ENCODE measurements at regions of chr9 and their contacts with region 1.

Region 1: DNA sequence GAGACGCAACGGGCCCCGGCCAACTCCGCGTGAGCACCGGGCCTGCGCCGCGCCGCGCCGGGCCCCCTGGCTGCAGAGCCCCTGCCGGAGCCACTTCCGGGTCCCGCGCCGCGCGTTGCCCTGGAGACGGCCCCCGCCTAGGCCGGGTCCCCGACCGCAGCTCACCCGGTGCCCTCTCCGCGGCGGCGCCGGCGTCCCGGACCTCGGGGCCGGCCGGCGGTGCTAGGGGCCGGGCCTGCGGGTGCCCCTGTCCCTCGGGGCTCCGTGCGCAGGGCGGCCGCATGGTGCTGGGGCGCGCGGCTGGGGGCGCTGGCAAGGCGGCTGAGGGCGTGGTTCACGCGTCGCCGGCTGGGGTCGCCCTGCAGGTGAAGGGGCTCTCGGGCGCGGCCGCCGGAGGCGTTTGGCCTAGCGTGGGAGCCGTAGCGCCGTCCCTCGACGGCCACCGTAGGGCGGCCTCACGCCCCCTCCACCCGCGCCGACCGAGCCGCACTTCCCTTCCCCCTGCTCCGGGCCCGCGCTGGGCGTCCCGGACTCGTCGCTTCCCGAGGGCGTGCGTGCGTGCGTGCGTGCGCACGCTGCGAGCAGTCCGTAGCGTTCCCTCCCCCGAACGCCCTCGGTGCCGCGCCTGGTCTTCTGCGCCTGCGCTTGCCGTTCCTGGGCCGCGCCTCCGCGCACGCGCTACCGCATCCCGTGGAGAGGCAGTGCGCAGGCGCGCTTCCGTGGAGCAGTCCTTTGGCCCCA is at the start of gene TMEM250:
- DNase-seq: peak; percentile 94 to 98 (median 97)
- ATAC-seq: peak; percentile 94
- H3K4me3 ChIP-seq: peak within 1 kb of the TSS; percentile 81
- H3K4me3 Mint-ChIP-seq: peak within 1 kb of the TSS; percentile 73 to 87 (median 84)
- H3K27ac ChIP-seq: peak within 1 kb of the TSS; percentile 87
- H3K27ac Mint-ChIP-seq: peak within 1 kb of the TSS; percentile 13 to 91 (median 84)
- H3K4me1 ChIP-seq: peaks cover 14 to 33% of the 10 kb centered on the region in 2 donors
- H3K4me1 Mint-ChIP-seq: peaks cover 3 to 26% (median 11%) of the 10 kb centered on the region in 7 donors
- H3K27me3 ChIP-seq: no peaks in the 10 kb centered on the region
- H3K27me3 Mint-ChIP-seq: no peaks in the 10 kb centered on the region
- total RNA-seq, gene TMEM250: 16.4 to 55.3 (median 41.3) TPM

Region 2: GRCh38 chr9:135602789-135603481 is 515.6 kb before region 1 on chr9:
- CTCF ChIA-PET with region 1: no interaction called
- POLR2A ChIA-PET with region 1: no interaction called
- intact Hi-C with region 1: loop called in 1 of 2 experiments (anchors 10 kb)
- DNase-seq: peak in 7 of 9 donors; percentile 31 to 56 (median 37)
- ATAC-seq: peak; percentile 61
- H3K4me3 ChIP-seq: no peak overlapping the region
- H3K4me3 Mint-ChIP-seq: no peak overlapping the region
- H3K27ac ChIP-seq: no peak overlapping the region
- H3K27ac Mint-ChIP-seq: no peak overlapping the region
- H3K4me1 ChIP-seq: no peaks in the 10 kb centered on the region
- H3K4me1 Mint-ChIP-seq: peaks cover 0 to 3% (median 0%) of the 10 kb centered on the region in 7 donors
- H3K27me3 ChIP-seq: no peaks in the 10 kb centered on the region
- H3K27me3 Mint-ChIP-seq: peaks cover 7 to 26% (median 8%) of the 10 kb centered on the region in 5 donors

Region 3: DNA sequence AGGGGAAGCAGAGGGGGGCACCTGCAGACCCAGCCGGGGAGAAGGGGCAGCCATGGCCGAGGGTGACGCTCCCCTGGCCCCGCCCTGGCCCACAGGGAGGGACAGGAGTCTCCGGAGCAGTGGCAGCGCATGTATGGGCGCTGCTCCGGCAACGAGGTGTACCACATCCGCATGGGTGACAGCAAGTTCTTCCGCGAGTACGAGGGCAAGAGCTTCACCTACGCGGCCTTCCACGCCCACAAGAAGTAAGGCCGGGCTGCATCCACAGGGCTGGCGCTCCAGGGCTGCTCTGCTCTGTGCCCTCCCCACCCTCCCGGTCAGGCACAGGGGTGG is 348.3 kb before region 1 on chr9:
- CTCF ChIA-PET with region 1: no interaction called
- POLR2A ChIA-PET with region 1: no interaction called
- intact Hi-C with region 1: no loop called
- DNase-seq: no peak
- ATAC-seq: no peak
- H3K4me3 ChIP-seq: no peak overlapping the region
- H3K4me3 Mint-ChIP-seq: no peak overlapping the region
- H3K27ac ChIP-seq: no peak overlapping the region
- H3K27ac Mint-ChIP-seq: no peak overlapping the region
- H3K4me1 ChIP-seq: no peaks in the 10 kb centered on the region
- H3K4me1 Mint-ChIP-seq: no peaks in the 10 kb centered on the region
- H3K27me3 ChIP-seq: no peaks in the 10 kb centered on the region
- H3K27me3 Mint-ChIP-seq: no peaks in the 10 kb centered on the region

Region 4: DNA sequence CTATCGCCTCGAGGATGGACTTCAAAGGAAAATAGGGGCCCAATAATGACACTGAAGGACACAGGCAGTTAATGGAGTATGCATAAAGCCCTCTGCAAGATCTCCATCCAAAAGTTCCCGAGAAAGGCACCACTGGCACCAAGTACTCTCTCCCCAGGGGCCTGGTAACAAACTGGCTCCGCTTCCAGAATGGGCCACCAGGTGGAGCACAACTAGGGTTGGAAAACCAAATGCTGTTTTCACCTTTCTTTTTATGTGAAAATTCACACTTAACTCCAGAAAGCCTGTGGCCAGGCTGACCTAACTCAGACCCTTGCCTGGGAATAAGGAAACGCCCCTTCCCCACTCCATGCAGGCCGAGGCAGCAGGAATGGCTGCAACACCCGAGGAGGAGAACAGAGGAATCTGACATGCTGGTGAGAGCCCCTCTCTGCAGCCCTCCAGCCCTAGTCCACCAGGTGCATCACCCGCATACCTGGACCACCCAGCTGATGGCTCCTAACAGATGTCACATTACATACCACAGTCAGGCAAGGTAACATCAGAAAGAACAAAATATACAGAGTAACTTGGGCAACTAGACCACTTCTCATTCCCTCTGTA is 253.9 kb before region 1 on chr9:
- CTCF ChIA-PET with region 1: interaction called, 4 read pairs
- POLR2A ChIA-PET with region 1: no interaction called
- intact Hi-C with region 1: loop called (anchors 1 kb)
- DNase-seq: peak; percentile 20 to 70 (median 55)
- ATAC-seq: peak; percentile 74
- H3K4me3 ChIP-seq: no peak overlapping the region
- H3K4me3 Mint-ChIP-seq: no peak overlapping the region
- H3K27ac ChIP-seq: no peak overlapping the region
- H3K27ac Mint-ChIP-seq: no peak overlapping the region
- H3K4me1 ChIP-seq: peaks cover 0 to 4% of the 10 kb centered on the region in 2 donors
- H3K4me1 Mint-ChIP-seq: peaks cover 5 to 26% (median 17%) of the 10 kb centered on the region in 7 donors
- H3K27me3 ChIP-seq: no peaks in the 10 kb centered on the region
- H3K27me3 Mint-ChIP-seq: no peaks in the 10 kb centered on the region

Region 5: DNA sequence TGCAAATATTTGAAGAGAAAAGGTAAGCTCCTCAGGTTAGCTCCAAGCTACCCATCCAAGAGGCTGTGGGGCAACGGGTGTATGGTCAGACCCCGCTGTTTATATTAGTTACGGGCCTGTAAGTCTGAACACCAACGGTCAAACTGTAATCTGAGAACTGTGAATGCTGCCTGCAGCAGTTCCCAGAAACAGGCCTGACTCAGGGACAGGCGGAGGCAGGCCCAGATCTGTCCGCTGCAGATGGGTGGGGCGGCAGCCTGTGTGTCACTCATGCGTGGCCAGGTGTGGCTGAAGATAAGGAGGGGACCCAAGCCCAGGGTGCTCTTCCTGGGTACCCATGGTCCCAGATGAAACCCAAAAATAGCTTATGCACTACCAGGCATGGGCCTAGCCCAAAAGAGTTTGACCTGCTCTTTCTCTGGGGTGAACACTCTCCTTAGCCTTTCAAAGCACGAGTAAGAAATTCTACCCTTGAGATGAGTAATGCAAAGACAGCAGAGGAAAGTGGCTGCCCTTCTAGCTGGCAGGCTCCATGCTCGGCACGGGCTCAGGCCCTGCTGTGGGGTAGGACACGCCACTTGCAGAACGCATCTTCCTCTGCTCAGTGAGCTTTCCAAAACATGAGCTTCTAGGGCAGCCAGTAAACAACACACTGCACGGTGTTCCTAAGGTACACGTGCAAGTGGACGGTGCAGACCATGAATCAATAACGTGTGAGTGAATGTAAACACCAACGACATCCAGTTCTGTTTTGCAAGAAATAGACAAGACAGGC is 166.4 kb before region 1 on chr9:
- CTCF ChIA-PET with region 1: no interaction called
- POLR2A ChIA-PET with region 1: no interaction called
- intact Hi-C with region 1: no loop called
- DNase-seq: no peak
- ATAC-seq: no peak
- H3K4me3 ChIP-seq: no peak overlapping the region
- H3K4me3 Mint-ChIP-seq: no peak overlapping the region
- H3K27ac ChIP-seq: no peak overlapping the region
- H3K27ac Mint-ChIP-seq: no peak overlapping the region
- H3K4me1 ChIP-seq: no peaks in the 10 kb centered on the region
- H3K4me1 Mint-ChIP-seq: peaks cover 0 to 13% (median 6%) of the 10 kb centered on the region in 7 donors
- H3K27me3 ChIP-seq: no peaks in the 10 kb centered on the region
- H3K27me3 Mint-ChIP-seq: no peaks in the 10 kb centered on the region

Region 6: GRCh38 chr9:135971892-135972291 is 146.6 kb before region 1 on chr9:
- CTCF ChIA-PET with region 1: interaction called, 47 read pairs
- POLR2A ChIA-PET with region 1: interaction called, 4 read pairs
- intact Hi-C with region 1: loop called (anchors 1 kb)
- DNase-seq: peak in 8 of 9 donors; percentile 34 to 61 (median 56)
- ATAC-seq: peak; percentile 60
- H3K4me3 ChIP-seq: no peak overlapping the region
- H3K4me3 Mint-ChIP-seq: no peak overlapping the region
- H3K27ac ChIP-seq: no peak overlapping the region
- H3K27ac Mint-ChIP-seq: peak overlapping the region in 1 of 9 donors; percentile 37
- H3K4me1 ChIP-seq: peaks cover 4 to 8% of the 10 kb centered on the region in 2 donors
- H3K4me1 Mint-ChIP-seq: peaks cover 6 to 14% (median 8%) of the 10 kb centered on the region in 7 donors
- H3K27me3 ChIP-seq: no peaks in the 10 kb centered on the region
- H3K27me3 Mint-ChIP-seq: peaks cover 0 to 6% (median 3%) of the 10 kb centered on the region in 5 donors

Region 7: DNA sequence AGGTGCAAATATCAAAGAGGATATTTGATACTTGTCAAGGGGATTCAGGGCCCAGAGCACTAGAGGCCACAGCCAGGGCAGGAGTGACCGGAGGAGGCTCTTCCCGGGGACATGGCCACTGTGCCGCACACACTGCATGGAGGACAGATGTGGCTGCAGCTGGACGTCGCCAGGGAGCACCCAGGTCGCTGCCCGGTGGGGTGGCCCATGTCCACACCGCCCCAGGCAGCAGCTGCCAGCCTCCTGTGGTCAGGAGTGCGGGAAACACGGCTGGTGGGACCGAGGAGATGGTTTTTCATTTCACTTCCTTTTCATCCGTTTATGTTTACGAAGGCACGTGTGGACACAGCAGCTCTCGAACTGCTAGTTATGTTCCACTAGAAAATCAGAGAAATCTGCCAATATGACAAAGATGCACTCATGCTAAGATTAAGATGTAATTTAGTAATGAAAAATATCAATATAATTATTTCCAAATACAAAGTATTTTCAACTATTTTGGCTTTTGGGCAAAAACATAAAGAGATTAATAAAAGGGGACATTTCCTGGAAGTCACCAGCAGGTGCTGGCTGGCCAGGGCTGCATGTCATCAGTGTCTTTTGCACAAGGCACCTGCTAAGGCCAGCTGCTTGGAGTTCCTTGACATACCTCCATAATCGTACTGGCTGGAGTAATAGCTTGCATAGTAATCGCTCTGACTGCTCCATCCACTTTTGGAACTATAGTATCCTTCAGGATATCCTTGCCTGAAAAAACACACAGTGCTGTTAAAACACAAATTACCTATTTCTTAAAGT is 349.5 kb after region 1 on chr9:
- CTCF ChIA-PET with region 1: no interaction called
- POLR2A ChIA-PET with region 1: no interaction called
- intact Hi-C with region 1: no loop called
- DNase-seq: no peak
- ATAC-seq: no peak
- H3K4me3 ChIP-seq: no peak overlapping the region
- H3K4me3 Mint-ChIP-seq: no peak overlapping the region
- H3K27ac ChIP-seq: no peak overlapping the region
- H3K27ac Mint-ChIP-seq: no peak overlapping the region
- H3K4me1 ChIP-seq: no peaks in the 10 kb centered on the region
- H3K4me1 Mint-ChIP-seq: peaks cover 0 to 6% (median 0%) of the 10 kb centered on the region in 7 donors
- H3K27me3 ChIP-seq: no peaks in the 10 kb centered on the region
- H3K27me3 Mint-ChIP-seq: no peaks in the 10 kb centered on the region

Measured in naive thymus-derived CD4-positive, alpha-beta T cell (primary cell).